ENCODE measurements at regions of chrX and their contacts with region 1.

Region 1: GRCh38 chrX:70096052-70096451 is 33.8 kb downstream of the OTUD6A start:
- DNase-seq: no peak
- ATAC-seq: no peak
- H3K4me3 ChIP-seq: no peak overlapping the region
- H3K4me3 Mint-ChIP-seq: no peak overlapping the region
- H3K27ac ChIP-seq: no peak overlapping the region
- H3K27ac Mint-ChIP-seq: no peak overlapping the region
- H3K4me1 ChIP-seq: no peaks in the 10 kb centered on the region
- H3K4me1 Mint-ChIP-seq: no peaks in the 10 kb centered on the region
- H3K27me3 ChIP-seq: no peaks in the 10 kb centered on the region
- H3K27me3 Mint-ChIP-seq: peaks cover 5 to 20% of the 10 kb centered on the region in 2 donors
- CTCF ChIP-seq: no peak

Region 2: GRCh38 chrX:69210581-69210980 is 885.5 kb before region 1 on chrX:
- intact Hi-C with region 1: no loop called
- DNase-seq: no peak
- ATAC-seq: no peak
- H3K4me3 ChIP-seq: no peak overlapping the region
- H3K4me3 Mint-ChIP-seq: no peak overlapping the region
- H3K27ac ChIP-seq: no peak overlapping the region
- H3K27ac Mint-ChIP-seq: no peak overlapping the region
- H3K4me1 ChIP-seq: peaks cover 2% of the 10 kb centered on the region
- H3K4me1 Mint-ChIP-seq: peaks cover 0 to 6% of the 10 kb centered on the region in 2 donors
- H3K27me3 ChIP-seq: no peaks in the 10 kb centered on the region
- H3K27me3 Mint-ChIP-seq: peaks cover 0 to 8% of the 10 kb centered on the region in 2 donors
- CTCF ChIP-seq: no peak

Region 3: GRCh38 chrX:69538321-69538876 is 557.7 kb before region 1 on chrX:
- intact Hi-C with region 1: loop called (anchors 5 kb)
- DNase-seq: peak; percentile 34 to 77
- ATAC-seq: peak; percentile 75 to 94 (median 88)
- H3K4me3 ChIP-seq: no peak overlapping the region
- H3K4me3 Mint-ChIP-seq: no peak overlapping the region
- H3K27ac ChIP-seq: no peak overlapping the region
- H3K27ac Mint-ChIP-seq: peak overlapping the region in 1 of 2 donors; percentile 55
- H3K4me1 ChIP-seq: peaks cover 7% of the 10 kb centered on the region
- H3K4me1 Mint-ChIP-seq: peaks cover 8 to 13% of the 10 kb centered on the region in 2 donors
- H3K27me3 ChIP-seq: no peaks in the 10 kb centered on the region
- H3K27me3 Mint-ChIP-seq: peaks cover 4 to 21% of the 10 kb centered on the region in 2 donors
- CTCF ChIP-seq: peak; percentile 36

Region 4: DNA sequence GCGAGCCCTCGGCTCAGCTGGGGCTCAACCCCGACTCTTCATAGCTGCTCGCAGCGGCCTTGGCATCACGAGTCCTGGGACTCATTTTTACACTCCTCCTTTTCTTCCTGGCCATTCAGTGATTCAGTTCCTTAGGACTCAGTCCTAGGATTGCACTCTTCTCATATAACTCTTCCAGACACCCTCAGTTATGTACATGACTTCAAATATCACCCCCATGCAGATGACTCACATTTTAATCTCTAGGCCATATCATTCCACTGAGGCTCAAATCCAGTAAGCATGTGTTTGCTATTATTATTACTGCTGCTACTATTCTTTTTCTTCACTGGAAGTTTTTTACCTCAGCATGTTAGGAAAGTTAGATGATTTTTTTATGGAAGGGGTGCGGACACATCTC is 1219.9 kb after region 1 on chrX:
- intact Hi-C with region 1: no loop called
- DNase-seq: no peak
- ATAC-seq: no peak
- H3K4me3 ChIP-seq: no peak overlapping the region
- H3K4me3 Mint-ChIP-seq: no peak overlapping the region
- H3K27ac ChIP-seq: no peak overlapping the region
- H3K27ac Mint-ChIP-seq: no peak overlapping the region
- H3K4me1 ChIP-seq: no peaks in the 10 kb centered on the region
- H3K4me1 Mint-ChIP-seq: no peaks in the 10 kb centered on the region
- H3K27me3 ChIP-seq: no peaks in the 10 kb centered on the region
- H3K27me3 Mint-ChIP-seq: no peaks in the 10 kb centered on the region
- CTCF ChIP-seq: no peak